Caco-2 (cell line): ENCODE measurements at regions of chr11 and their contacts with region 1.

Region 1: DNA sequence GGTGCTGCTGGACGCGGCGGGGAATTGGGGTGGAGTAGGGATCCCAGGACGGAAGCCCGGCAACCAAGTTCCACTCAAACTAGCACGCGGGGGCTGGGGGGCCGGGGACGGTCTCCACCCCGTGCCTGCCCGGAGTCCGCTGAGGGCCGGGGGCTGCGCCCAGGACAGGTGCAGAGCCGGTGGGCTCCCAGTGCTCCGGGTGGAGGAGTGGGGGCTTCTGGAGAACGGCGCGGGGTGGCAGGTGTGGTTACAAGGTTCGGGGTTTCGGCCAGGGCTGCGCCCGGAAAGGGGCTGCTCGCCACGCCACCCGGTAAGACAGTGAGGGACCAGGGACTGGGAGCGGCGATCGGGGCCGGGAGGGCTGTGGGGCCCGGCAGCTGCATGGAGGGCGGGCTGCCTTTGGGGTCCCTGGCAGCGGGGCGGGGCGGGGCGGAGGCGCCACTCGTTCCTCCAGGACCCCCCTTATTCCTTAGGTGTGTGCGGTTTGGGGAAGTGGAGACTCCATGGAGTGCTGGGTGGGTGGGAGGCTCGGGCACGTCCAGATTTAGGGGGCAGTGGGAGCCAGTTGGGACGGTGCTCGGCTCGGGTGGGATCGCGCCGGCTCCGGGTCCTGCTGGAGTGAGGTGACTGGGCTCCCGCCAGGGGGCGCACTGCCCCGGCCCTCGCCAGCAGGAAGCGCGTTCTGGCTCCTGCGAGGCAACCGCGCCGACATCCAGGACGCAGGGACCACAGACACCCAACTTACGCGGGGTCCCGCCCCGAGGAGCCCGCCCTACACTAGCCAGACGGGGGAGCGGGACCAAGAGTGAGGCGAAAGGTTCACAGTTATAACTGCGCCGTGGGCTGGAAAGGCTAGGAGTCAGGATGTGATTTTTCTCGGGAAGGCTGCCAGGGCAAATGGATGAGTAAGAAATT is 868 bp downstream of the TSPAN18 start:
- DNase-seq: peak; percentile 83 to 89
- H3K4me3 ChIP-seq: peak overlapping the region; percentile 72
- H3K4me3 Mint-ChIP-seq: peak overlapping the region; percentile 76
- H3K27ac Mint-ChIP-seq: no peak overlapping the region
- H3K4me1 ChIP-seq: peaks cover 23% of the 10 kb centered on the region
- H3K4me1 Mint-ChIP-seq: peaks cover 8% of the 10 kb centered on the region
- H3K27me3 ChIP-seq: no peaks in the 10 kb centered on the region
- H3K27me3 Mint-ChIP-seq: no peaks in the 10 kb centered on the region
- CTCF ChIP-seq: peak; percentile 94 to 96

Region 2: GRCh38 chr11:44775366-44775984 is 47.8 kb after region 1 on chr11:
- CTCF ChIA-PET with region 1: no interaction called
- POLR2A ChIA-PET with region 1: no interaction called
- intact Hi-C with region 1: loop called (anchors 1 kb)
- DNase-seq: peak; percentile 77 to 82
- H3K4me3 ChIP-seq: no peak overlapping the region
- H3K4me3 Mint-ChIP-seq: no peak overlapping the region
- H3K27ac Mint-ChIP-seq: no peak overlapping the region
- H3K4me1 ChIP-seq: peaks cover 3% of the 10 kb centered on the region; the same call in 1 of the 2 replicates
- H3K4me1 Mint-ChIP-seq: peaks cover 4% of the 10 kb centered on the region
- H3K27me3 ChIP-seq: no peaks in the 10 kb centered on the region; the same call in 1 of the 2 replicates
- H3K27me3 Mint-ChIP-seq: peaks cover 6% of the 10 kb centered on the region
- CTCF ChIP-seq: peak; percentile 85 to 91

Region 3: GRCh38 chr11:44911029-44911814 is 183.6 kb after region 1 on chr11:
- CTCF ChIA-PET with region 1: interaction called, 3 read pairs
- POLR2A ChIA-PET with region 1: no interaction called
- intact Hi-C with region 1: loop called (anchors 1 kb)
- DNase-seq: peak; percentile 81 to 86
- H3K4me3 ChIP-seq: no peak overlapping the region
- H3K4me3 Mint-ChIP-seq: no peak overlapping the region
- H3K27ac Mint-ChIP-seq: no peak overlapping the region
- H3K4me1 ChIP-seq: peaks cover 9% of the 10 kb centered on the region
- H3K4me1 Mint-ChIP-seq: peaks cover 7% of the 10 kb centered on the region
- H3K27me3 ChIP-seq: no peaks in the 10 kb centered on the region
- H3K27me3 Mint-ChIP-seq: no peaks in the 10 kb centered on the region
- CTCF ChIP-seq: peak; percentile 82 to 86